Dorsolateral prefrontal cortex (tissue), 120 donors: ENCODE measurements at regions of chr6 and their contacts with region 1.

Region 1: GRCh38 chr6:138161338-138162110 is at the start of gene ARFGEF3:
- DNase-seq: peak in 9 of 10 donors; percentile 41 to 84 (median 64)
- H3K4me3 ChIP-seq: peak within 1 kb of the TSS; percentile 67 to 95 (median 85)
- H3K27ac ChIP-seq: peak within 1 kb of the TSS; percentile 79 to 98 (median 95)
- H3K27me3 ChIP-seq: no peaks in the 10 kb centered on the region
- CTCF ChIP-seq: peak in 4 of 56 donors; percentile 3 to 38 (median 16)
- total RNA-seq, gene ARFGEF3: 30.0 to 93.7 (median 67.0) TPM

Region 2: GRCh38 chr6:138182939-138183789 is 21.6 kb after region 1 on chr6:
- intact Hi-C with region 1: loop called (anchors 2 kb)
- DNase-seq: peak; percentile 43 to 90 (median 80)
- H3K4me3 ChIP-seq: peak overlapping the region in 47 of 59 donors; percentile 0 to 57 (median 26)
- H3K27ac ChIP-seq: peak overlapping the region; percentile 76 to 98 (median 94)
- H3K27me3 ChIP-seq: no peaks in the 10 kb centered on the region
- CTCF ChIP-seq: peak in 3 of 56 donors; percentile 9 to 24 (median 15)